Dendritic cell treated with granulocyte-macrophage colony-stimulating factor and Interleukin-4, amounts not matched to agents 40 ng/mL and 50 ng/mL, for 4 days (primary cell): ENCODE measurements at regions of chr7 and their contacts with region 1.

Region 1: DNA sequence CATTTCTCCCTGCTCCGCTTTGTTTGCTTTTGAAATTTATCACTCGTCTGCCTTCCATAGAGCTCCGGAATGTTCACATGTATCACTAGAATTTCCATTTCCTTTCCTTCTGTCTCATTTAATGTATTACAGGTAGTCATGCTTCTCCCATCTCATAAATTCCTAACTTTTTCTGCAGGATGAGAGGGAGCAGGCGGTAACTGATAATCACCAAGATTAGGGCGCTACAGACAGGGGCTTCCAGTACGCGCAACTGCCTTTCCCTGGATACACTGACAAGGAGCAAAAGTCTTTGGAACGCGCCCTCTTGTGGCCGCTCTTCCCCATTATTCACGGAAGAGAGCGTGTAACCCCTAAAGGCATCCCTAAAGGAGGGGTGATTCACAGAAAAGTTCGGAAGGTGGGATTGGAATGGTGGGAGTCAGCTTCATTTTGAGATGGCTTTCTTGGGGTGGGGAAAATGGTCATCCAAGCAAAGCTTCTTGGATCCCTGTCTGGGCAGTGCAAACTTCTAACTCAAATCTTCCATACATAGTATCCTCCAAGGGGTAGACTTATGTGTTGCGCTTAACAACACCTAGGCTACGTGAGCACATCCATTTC is 6.5 kb downstream of the INHBA start:
- H3K4me3 Mint-ChIP-seq: peak overlapping the region; percentile 25
- H3K27ac Mint-ChIP-seq: peak overlapping the region; percentile 38
- H3K4me1 Mint-ChIP-seq: peaks cover 58% of the 10 kb centered on the region
- H3K27me3 Mint-ChIP-seq: peaks cover 31% of the 10 kb centered on the region

Region 2: DNA sequence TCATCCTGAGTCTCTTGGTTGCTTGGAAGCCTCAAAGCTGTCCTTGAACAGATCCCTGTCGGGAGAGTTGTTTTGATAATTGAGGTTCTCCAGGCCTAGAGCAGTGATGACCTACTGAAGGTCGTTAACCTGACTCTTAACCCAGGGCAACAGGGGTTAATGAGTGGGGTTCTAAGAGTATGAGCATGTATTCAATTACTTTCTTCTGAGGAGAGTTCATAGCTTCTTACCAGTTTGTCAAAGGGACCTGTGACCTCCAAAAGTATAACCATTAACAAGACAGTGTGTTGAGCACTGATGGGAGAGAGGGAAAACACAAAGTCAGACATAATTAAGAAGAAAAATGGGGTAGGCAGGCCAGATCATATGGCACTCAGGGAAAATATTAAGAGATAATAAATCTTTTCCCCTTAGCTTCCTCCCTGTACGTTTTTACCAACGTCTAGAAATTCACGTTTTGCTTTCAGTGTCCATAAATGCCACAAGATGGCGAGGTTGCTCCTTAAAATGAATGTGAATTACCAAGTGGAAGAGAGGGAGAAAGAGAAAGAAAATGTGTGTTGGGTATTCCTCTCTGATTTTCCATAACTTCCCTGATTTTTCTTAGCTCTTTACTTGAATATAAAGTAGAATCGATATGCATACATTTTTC is 1464.0 kb before region 1 on chr7:
- intact Hi-C with region 1: loop called (anchors 10 kb)
- H3K4me3 Mint-ChIP-seq: no peak overlapping the region
- H3K27ac Mint-ChIP-seq: no peak overlapping the region
- H3K4me1 Mint-ChIP-seq: peaks cover 13% of the 10 kb centered on the region
- H3K27me3 Mint-ChIP-seq: no peaks in the 10 kb centered on the region

Region 3: DNA sequence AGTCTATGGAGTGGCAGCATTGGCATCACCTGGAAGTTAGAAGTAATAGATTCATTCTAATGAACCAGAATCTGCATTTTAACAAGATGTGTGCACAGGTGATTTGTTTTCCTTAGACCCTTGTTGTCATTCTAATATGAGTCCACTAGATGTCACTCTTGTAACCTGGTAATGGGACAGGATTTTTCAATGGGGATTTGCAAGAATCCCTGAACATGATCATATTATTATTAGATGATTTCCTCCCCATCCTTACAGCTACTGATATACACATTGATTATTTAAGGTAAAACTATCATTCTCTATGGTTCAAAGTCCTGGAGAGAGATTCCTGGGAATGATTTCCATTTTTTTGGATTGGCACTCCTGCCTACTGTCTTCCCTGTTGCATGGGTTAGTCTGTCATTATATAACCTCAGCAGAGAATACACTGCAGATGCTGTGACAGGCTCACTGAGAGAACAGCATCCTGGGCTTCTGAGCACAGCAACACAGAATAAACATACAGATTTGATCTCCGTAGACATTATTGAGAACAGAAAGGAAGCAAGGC is 1366.7 kb before region 1 on chr7:
- intact Hi-C with region 1: loop called (anchors 5 kb)
- H3K4me3 Mint-ChIP-seq: no peak overlapping the region
- H3K27ac Mint-ChIP-seq: no peak overlapping the region
- H3K4me1 Mint-ChIP-seq: no peaks in the 10 kb centered on the region
- H3K27me3 Mint-ChIP-seq: no peaks in the 10 kb centered on the region